Common myeloid progenitor, CD34-positive (primary cell): ENCODE measurements at regions of chr1 and their contacts with region 1.

Region 1: GRCh38 chr1:45669379-45669778 is 17.0 kb downstream of the GPBP1L1 start:
- DNase-seq: no peak
- H3K4me3 ChIP-seq: no peak overlapping the region
- H3K27ac ChIP-seq: no peak overlapping the region
- H3K4me1 ChIP-seq: peaks cover 0 to 3% (median 0%) of the 10 kb centered on the region in 4 experiments
- H3K27me3 ChIP-seq: no peaks in the 10 kb centered on the region

Region 2: DNA sequence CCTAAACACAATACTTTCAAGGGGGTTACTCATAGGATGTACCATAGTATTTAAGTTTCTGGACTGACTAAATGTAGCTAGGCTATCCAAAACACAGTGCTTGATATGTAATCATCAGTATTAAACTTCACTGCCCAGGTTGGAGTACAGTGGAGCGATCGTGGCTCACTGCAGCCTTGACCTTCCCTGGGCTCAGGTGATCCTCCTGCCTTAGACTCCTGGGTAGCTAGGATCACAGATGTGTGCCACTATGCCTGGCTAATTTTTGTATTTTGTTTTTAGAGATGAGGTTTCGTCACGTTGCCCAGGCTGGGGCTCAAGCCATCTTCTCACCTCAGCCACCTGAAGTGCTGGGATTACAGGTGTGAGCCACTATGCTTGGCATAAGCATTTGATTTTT is 75.0 kb before region 1 on chr1:
- CTCF ChIA-PET with region 1: no interaction called
- POLR2A ChIA-PET with region 1: no interaction called
- DNase-seq: no peak
- H3K4me3 ChIP-seq: no peak overlapping the region
- H3K27ac ChIP-seq: no peak overlapping the region
- H3K4me1 ChIP-seq: no peaks in the 10 kb centered on the region
- H3K27me3 ChIP-seq: no peaks in the 10 kb centered on the region

Region 3: GRCh38 chr1:45682942-45683341 is 13.6 kb after region 1 on chr1:
- CTCF ChIA-PET with region 1: interaction called, 10 read pairs
- POLR2A ChIA-PET with region 1: interaction called, 6 read pairs
- DNase-seq: no peak
- H3K4me3 ChIP-seq: peak overlapping the region in 1 of 7 experiments; percentile 34
- H3K27ac ChIP-seq: peak overlapping the region in 1 of 2 experiments; percentile 32
- H3K4me1 ChIP-seq: peaks cover 12 to 67% (median 44%) of the 10 kb centered on the region in 4 experiments
- H3K27me3 ChIP-seq: no peaks in the 10 kb centered on the region